ENCODE measurements at regions of chr2 and their contacts with region 1.

Region 1: GRCh38 chr2:171893824-171894611 is at the start of gene SLC25A12:
- DNase-seq: peak; percentile 80 to 85
- ATAC-seq: peak; percentile 98 to 99 (median 98)
- H3K4me3 ChIP-seq: peak within 1 kb of the TSS; percentile 75 to 95 (median 84)
- H3K27ac ChIP-seq: peak within 1 kb of the TSS; percentile 73 to 95 (median 86)
- H3K4me1 ChIP-seq: peaks cover 0 to 44% (median 21%) of the 10 kb centered on the region in 9 donors
- H3K27me3 ChIP-seq: peaks cover 0 to 4% (median 0%) of the 10 kb centered on the region in 7 donors
- CTCF ChIP-seq: no peak
- total RNA-seq, gene SLC25A12: 86.4 to 169 (median 123) TPM

Region 2: DNA sequence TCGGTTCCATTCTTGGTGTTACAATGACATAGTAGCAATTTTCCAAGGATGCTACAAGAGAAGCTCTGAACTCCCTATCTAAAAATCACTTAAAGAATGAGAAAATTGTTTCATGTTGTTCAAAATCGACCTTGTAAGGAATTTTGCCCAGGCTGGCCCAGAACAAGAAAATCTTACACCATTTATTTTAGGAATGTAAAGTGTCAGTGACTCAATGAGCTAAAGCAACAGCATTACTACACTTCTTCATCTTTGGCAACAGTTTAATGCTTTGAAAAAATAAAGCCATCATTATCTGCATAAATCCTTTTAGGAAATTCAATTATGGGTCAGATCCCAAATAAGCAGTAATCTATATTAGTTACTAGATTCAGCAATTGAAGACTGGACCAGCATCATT is 38.6 kb before region 1 on chr2:
- intact Hi-C with region 1: loop called in 2 of 10 experiments (anchors 5 kb)
- DNase-seq: no peak
- ATAC-seq: no peak
- H3K4me3 ChIP-seq: no peak overlapping the region
- H3K27ac ChIP-seq: no peak overlapping the region
- H3K4me1 ChIP-seq: peaks cover 0 to 36% (median 15%) of the 10 kb centered on the region in 9 donors
- H3K27me3 ChIP-seq: no peaks in the 10 kb centered on the region
- CTCF ChIP-seq: no peak

Region 3: DNA sequence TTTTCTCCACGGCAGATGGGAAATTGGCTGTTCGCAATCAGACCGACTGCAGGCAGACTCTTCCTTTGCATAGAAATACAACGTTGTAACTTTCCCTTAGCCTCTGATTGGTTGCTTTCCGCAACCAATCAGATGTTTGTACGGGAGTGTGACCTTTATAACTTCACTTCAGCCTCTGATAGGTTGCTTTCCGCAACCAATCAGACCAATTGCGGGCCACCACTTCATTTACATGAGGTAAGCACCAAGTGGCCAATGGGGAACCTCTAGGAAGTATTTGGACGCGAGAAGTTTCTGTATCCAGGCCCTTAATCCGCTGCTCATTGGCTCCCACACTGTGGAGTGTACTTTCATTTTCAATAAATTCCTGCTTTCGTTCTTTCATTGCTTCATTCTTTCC is 19.1 kb before region 1 on chr2:
- intact Hi-C with region 1: no loop called
- DNase-seq: no peak
- ATAC-seq: no peak
- H3K4me3 ChIP-seq: no peak overlapping the region
- H3K27ac ChIP-seq: no peak overlapping the region
- H3K4me1 ChIP-seq: peaks cover 5 to 51% (median 27%) of the 10 kb centered on the region in 9 donors
- H3K27me3 ChIP-seq: no peaks in the 10 kb centered on the region
- CTCF ChIP-seq: no peak

Region 4: DNA sequence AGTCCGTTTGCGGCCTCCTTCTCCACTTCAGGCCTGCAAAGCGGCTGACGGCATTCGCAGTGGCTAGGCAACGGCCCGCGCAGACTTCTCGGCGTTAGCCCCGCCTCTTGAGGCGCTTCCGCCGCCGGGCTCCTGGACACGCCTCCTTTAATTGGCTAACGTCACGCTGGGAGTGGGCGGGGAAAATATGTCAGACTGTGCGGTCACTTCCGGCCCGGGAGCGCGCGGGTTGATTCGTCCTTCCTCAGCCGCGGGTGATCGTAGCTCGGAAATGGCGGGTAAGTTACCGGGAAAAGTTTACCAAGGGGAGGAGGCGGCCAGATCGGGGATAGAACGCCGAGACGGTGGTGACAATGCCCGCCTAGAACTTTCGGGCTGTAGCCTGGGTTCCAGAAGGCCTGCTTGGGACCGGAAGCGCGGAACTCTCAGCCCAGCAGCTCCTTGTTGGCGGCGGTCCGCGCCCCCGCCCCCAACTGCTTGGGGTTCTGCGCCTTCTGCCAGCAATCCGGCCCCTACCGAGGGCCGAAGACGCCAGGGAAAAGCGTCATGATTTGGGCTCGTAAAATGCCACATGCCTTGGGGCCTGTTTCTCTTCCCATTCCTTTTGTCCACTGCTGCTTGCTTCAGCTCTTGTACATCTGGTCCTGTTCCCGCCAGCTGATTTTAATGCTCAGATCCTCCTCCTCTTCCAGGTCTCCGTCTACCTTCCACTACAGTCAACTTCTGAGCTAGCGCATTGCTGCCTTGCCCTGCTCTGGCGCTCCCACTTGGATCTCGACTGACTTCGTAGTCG is 28.4 kb after region 1 on chr2 and contains the start of gene HAT1:
- intact Hi-C with region 1: loop called in 3 of 10 experiments (anchors 1 to 2 kb)
- DNase-seq: peak; percentile 95 to 97
- ATAC-seq: peak; percentile 99 to 100 (median 100)
- H3K4me3 ChIP-seq: peak within 1 kb of the TSS; percentile 68 to 94 (median 86)
- H3K27ac ChIP-seq: peak within 1 kb of the TSS; percentile 72 to 95 (median 92)
- H3K4me1 ChIP-seq: peaks cover 7 to 34% (median 24%) of the 10 kb centered on the region in 9 donors
- H3K27me3 ChIP-seq: no peaks in the 10 kb centered on the region
- CTCF ChIP-seq: no peak
- total RNA-seq, gene HAT1: 25.0 to 45.5 (median 36.6) TPM

Region 5: DNA sequence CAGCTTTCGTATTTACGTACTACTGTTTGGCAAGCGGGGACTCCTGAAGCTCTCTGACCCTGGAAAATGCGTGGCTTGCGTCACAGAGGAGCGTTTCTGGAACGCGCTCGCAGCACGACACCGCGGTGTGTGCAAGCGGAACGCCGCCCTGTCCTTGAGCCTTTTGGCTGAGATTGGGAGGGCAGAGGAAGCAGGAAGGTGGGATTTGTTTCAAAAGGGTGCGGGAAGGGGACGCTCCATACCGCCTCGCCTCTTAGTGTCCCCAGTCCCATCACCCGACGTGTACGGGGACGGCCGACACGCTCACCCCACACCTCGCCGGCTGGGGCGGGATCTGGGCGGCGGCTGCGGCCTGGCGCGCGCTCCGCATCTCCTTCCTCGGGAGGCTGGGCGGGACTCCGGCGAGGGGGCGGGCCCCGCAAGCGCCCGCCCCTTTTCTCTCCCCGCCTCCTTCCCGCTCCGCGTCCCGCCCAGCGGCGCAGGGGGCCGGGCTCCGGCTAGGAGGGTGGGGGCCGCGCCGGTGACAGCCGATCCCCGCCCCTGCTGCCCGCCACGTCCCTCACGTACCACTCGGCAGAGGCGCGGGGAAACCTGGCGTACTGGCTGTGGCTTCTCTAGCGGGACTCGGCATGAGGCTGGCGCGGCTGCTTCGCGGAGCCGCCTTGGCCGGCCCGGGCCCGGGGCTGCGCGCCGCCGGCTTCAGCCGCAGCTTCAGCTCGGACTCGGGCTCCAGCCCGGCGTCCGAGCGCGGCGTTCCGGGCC is 661.7 kb after region 1 on chr2 and contains the start of gene PDK1:
- intact Hi-C with region 1: no loop called
- DNase-seq: peak; percentile 85 to 91
- ATAC-seq: peak; percentile 96 to 98 (median 98)
- H3K4me3 ChIP-seq: peak within 1 kb of the TSS; percentile 82 to 92 (median 90)
- H3K27ac ChIP-seq: peak within 1 kb of the TSS; percentile 80 to 98 (median 94)
- H3K4me1 ChIP-seq: peaks cover 0 to 46% (median 22%) of the 10 kb centered on the region in 9 donors
- H3K27me3 ChIP-seq: no peaks in the 10 kb centered on the region
- CTCF ChIP-seq: no peak
- total RNA-seq, gene PDK1: 34.8 to 106 (median 54.3) TPM